ENCODE measurements at regions of chr6 and their contacts with region 1.

Region 1: GRCh38 chr6:50952092-50952907 is 133.6 kb downstream of the TFAP2B start:
- DNase-seq: peak; percentile 98
- H3K4me3 ChIP-seq: peak overlapping the region; percentile 1
- H3K27ac ChIP-seq: peak overlapping the region; percentile 79
- H3K4me1 ChIP-seq: peaks cover 43% of the 10 kb centered on the region
- H3K27me3 ChIP-seq: no peaks in the 10 kb centered on the region
- CTCF ChIP-seq: 0 out of 2 replicates have a peak, but pooled peaks have one; percentile 24

Region 2: GRCh38 chr6:50829898-50830439 is 122.3 kb before region 1 on chr6:
- CTCF ChIA-PET with region 1: no interaction called
- POLR2A ChIA-PET with region 1: no interaction called
- intact Hi-C with region 1: loop called (anchors 2 kb)
- DNase-seq: no peak
- H3K4me3 ChIP-seq: no peak overlapping the region
- H3K27ac ChIP-seq: no peak overlapping the region
- H3K4me1 ChIP-seq: peaks cover 62% of the 10 kb centered on the region
- H3K27me3 ChIP-seq: peaks cover 30% of the 10 kb centered on the region
- CTCF ChIP-seq: no peak

Region 3: DNA sequence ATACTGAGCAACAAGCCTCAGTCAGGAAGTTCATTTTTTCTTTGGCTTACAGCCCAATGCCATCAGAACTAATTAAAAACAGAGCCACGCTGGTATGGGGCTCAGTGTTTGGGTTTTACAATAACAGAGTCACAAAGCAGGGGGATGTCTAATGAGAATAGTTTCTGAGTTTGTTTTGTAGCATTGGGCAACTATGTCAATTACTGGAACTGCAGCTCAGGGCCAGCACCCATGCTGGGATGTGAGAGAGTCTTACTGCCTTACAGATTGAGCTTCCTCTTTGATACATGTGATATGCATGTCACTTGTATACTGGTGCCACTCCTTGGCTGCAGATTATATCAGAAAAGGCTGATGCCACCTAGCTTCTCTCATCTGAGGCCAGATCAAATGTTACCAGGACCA is 16.0 kb before region 1 on chr6:
- CTCF ChIA-PET with region 1: no interaction called
- POLR2A ChIA-PET with region 1: no interaction called
- intact Hi-C with region 1: loop called (anchors 1 kb)
- DNase-seq: peak; percentile 98
- H3K4me3 ChIP-seq: no peak overlapping the region
- H3K27ac ChIP-seq: peak overlapping the region; percentile 63
- H3K4me1 ChIP-seq: peaks cover 44% of the 10 kb centered on the region
- H3K27me3 ChIP-seq: no peaks in the 10 kb centered on the region
- CTCF ChIP-seq: 0 out of 2 replicates have a peak, but pooled peaks have one; percentile 16

Measured in A673 (cell line).